ENCODE measurements at regions of chr2 and their contacts with region 1.

Region 1: DNA sequence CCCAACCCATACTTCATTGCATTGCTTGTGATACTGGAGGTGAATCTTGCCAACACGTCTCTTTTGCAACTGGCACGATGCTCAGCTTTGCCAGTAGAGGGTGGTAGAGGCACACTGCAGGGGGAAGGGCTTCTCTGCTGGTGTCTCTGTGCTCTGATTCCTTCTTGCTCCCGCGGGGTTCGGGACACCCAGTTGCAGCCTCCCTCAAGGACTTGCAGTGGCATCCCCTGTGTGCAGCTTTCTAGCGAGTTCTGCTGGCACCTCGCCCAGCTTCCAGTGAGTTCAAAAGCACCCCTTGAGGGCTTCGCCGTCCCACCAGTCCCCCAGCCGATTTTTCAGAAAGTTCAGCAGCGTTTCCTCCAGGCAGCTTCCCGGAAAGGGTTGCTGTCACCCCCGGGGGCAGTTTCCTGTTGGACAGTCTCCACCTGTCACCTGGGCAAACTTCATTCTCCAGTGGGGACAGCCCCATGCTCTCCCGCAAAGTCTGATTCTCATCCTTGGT is 35.3 kb upstream of the EN1 start:
- DNase-seq: no peak
- H3K4me3 ChIP-seq: no peak overlapping the region
- H3K27ac ChIP-seq: no peak overlapping the region
- H3K27me3 ChIP-seq: no peaks in the 10 kb centered on the region
- CTCF ChIP-seq: peak; percentile 87

Region 2: GRCh38 chr2:118865106-118865505 is 17.7 kb before region 1 on chr2:
- CTCF ChIA-PET with region 1: interaction called, 13 read pairs
- POLR2A ChIA-PET with region 1: no interaction called
- DNase-seq: no peak
- H3K4me3 ChIP-seq: no peak overlapping the region
- H3K27ac ChIP-seq: no peak overlapping the region
- H3K27me3 ChIP-seq: peaks cover 26% of the 10 kb centered on the region
- CTCF ChIP-seq: peak; percentile 56

Region 3: GRCh38 chr2:118893100-118893499 is 10.3 kb after region 1 on chr2:
- CTCF ChIA-PET with region 1: interaction called, 19 read pairs
- POLR2A ChIA-PET with region 1: no interaction called
- DNase-seq: no peak
- H3K4me3 ChIP-seq: no peak overlapping the region
- H3K27ac ChIP-seq: no peak overlapping the region
- H3K27me3 ChIP-seq: no peaks in the 10 kb centered on the region
- CTCF ChIP-seq: no peak